ENCODE measurements at regions of chr20 and their contacts with region 1.

Region 1: GRCh38 chr20:52127309-52127708 is 64.3 kb downstream of the ZFP64 start:
- DNase-seq: no peak
- H3K4me3 Mint-ChIP-seq: no peak overlapping the region
- H3K27ac Mint-ChIP-seq: no peak overlapping the region
- H3K4me1 Mint-ChIP-seq: no peaks in the 10 kb centered on the region
- H3K27me3 Mint-ChIP-seq: no peaks in the 10 kb centered on the region
- CTCF ChIP-seq: no peak

Region 2: GRCh38 chr20:51500311-51500710 is 627.0 kb before region 1 on chr20:
- CTCF ChIA-PET with region 1: no interaction called
- POLR2A ChIA-PET with region 1: no interaction called
- intact Hi-C with region 1: no loop called
- DNase-seq: peak; percentile 53
- H3K4me3 Mint-ChIP-seq: no peak overlapping the region
- H3K27ac Mint-ChIP-seq: no peak overlapping the region
- H3K4me1 Mint-ChIP-seq: no peaks in the 10 kb centered on the region
- H3K27me3 Mint-ChIP-seq: peaks cover 13% of the 10 kb centered on the region
- CTCF ChIP-seq: no peak

Region 3: DNA sequence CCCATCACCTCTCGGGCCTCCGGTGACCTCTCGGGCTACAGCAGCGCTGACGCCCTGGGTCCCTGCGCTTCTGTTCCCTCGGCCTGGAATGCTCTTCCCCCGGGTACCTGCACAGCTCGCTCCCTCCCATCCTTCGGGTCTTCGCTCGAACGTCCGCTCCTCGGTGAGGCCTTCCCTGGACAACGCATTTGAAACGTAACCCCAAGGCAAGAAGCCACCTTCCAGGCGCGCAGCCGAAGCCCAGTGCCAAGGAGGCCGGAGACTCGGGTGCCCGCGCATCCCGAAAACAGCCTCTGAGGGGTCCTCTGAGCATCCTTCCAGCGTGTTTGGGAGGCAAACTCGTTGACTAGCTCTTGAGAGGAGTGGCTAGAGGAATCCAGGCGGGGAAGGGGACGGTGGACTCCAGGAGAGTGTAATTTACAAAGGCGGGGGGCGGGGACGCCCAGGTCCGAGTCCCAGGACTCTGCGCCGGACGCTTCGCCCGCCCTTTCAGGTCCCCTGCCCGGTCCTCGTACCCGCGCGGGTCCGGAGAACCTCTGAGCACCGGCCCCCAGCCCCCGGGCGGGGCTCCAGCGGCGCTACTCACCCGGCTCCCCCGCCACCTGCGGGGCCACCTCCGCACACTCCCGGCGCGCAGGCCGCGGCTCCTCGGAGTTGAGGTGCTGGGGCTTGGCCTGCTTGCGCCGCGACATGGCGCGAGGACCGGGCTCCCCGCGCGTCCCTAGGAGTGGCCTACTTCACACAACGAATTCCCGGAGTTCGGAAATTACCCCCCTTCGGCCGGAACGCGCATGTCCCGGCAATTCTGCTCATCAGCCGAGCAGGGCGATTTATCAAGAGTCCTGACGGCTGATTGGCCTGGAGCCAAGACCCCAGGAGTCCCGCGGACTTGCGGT is 22.5 kb before region 1 on chr20:
- CTCF ChIA-PET with region 1: interaction called, 12 read pairs
- POLR2A ChIA-PET with region 1: interaction called, 3 read pairs
- intact Hi-C with region 1: no loop called
- DNase-seq: peak; percentile 39
- H3K4me3 Mint-ChIP-seq: peak overlapping the region; percentile 66
- H3K27ac Mint-ChIP-seq: no peak overlapping the region
- H3K4me1 Mint-ChIP-seq: no peaks in the 10 kb centered on the region
- H3K27me3 Mint-ChIP-seq: no peaks in the 10 kb centered on the region
- CTCF ChIP-seq: no peak

Region 4: GRCh38 chr20:52150440-52151258 is 23.3 kb after region 1 on chr20:
- CTCF ChIA-PET with region 1: interaction called, 86 read pairs
- POLR2A ChIA-PET with region 1: no interaction called
- intact Hi-C with region 1: loop called (anchors 1 kb)
- DNase-seq: peak; percentile 57
- H3K4me3 Mint-ChIP-seq: no peak overlapping the region
- H3K27ac Mint-ChIP-seq: no peak overlapping the region
- H3K4me1 Mint-ChIP-seq: no peaks in the 10 kb centered on the region
- H3K27me3 Mint-ChIP-seq: no peaks in the 10 kb centered on the region
- CTCF ChIP-seq: peak; percentile 68

Region 5: DNA sequence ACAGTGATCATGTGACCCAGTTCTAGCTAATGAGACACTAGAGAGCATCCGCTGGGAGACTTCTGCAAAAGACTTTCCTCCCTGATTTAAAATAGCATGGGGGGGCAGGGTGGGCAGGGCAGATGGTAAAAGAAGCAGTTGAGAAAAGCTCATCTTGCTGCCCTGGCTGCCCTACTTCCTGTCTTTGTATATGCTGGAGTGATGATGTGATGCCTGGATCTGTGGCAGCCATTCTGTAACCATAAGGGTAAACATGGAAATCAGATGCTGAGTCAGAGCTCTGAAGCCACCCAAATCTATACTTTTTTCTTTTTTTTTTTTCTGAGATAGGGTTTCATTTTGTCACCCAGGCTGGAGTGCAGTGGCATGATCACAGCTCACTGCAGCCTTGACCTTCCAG is 38.8 kb after region 1 on chr20:
- CTCF ChIA-PET with region 1: interaction called, 18 read pairs
- POLR2A ChIA-PET with region 1: no interaction called
- intact Hi-C with region 1: no loop called
- DNase-seq: no peak
- H3K4me3 Mint-ChIP-seq: no peak overlapping the region
- H3K27ac Mint-ChIP-seq: no peak overlapping the region
- H3K4me1 Mint-ChIP-seq: no peaks in the 10 kb centered on the region
- H3K27me3 Mint-ChIP-seq: no peaks in the 10 kb centered on the region
- CTCF ChIP-seq: no peak

Region 6: DNA sequence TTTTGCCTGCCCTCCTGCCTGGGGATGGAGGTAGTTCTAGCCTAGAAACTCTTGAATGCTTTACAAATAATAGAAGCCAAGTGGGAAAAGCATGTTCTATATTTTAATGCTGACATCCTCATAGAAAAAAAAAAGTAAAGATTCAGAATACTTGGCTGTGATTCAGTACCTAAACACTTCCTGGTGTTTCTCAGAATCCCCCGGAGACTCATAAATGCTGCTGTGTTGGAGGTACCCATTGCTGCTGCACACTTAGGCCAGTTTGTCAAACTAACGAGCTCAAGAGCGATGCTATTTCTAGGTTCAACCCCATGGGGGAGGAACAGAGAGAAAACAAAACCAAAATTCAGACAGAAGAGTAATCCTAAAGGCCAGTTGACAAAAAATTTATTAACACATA is 103.1 kb after region 1 on chr20:
- CTCF ChIA-PET with region 1: no interaction called
- POLR2A ChIA-PET with region 1: no interaction called
- intact Hi-C with region 1: no loop called
- DNase-seq: no peak
- H3K4me3 Mint-ChIP-seq: no peak overlapping the region
- H3K27ac Mint-ChIP-seq: no peak overlapping the region
- H3K4me1 Mint-ChIP-seq: no peaks in the 10 kb centered on the region
- H3K27me3 Mint-ChIP-seq: peaks cover 37% of the 10 kb centered on the region
- CTCF ChIP-seq: no peak

Region 7: DNA sequence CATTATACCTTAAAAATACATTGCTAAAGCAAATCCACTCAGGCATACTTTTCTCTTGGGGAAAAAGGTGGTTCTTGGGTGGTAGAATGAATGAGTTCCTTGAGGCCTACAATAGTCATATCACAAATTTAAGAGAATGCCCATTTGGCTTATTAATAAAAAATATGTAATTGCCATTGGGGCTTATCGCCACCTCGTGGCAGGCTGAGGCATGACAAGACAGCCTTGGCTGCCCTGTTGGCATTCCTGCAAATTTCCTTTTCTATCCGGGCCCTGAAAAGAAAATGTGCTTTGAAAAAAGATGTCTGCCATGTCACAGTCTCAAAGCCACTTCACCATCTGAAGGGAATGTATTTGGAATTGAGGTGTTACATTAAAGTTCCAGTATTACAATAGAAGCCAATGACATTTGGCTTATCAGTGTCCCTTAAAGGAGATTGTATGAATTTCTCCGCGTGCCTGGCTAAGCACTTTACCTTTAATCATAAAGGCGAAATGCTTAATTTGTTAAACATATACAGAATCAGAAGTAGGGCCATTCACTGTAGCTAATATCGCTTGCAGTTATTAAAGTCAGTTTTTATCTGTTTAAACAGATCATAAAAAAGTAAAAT is 252.5 kb after region 1 on chr20:
- CTCF ChIA-PET with region 1: interaction called, 9 read pairs
- POLR2A ChIA-PET with region 1: no interaction called
- intact Hi-C with region 1: loop called (anchors 1 kb)
- DNase-seq: peak; percentile 36
- H3K4me3 Mint-ChIP-seq: no peak overlapping the region
- H3K27ac Mint-ChIP-seq: no peak overlapping the region
- H3K4me1 Mint-ChIP-seq: no peaks in the 10 kb centered on the region
- H3K27me3 Mint-ChIP-seq: peaks cover 21% of the 10 kb centered on the region
- CTCF ChIP-seq: peak; percentile 88

Region 8: DNA sequence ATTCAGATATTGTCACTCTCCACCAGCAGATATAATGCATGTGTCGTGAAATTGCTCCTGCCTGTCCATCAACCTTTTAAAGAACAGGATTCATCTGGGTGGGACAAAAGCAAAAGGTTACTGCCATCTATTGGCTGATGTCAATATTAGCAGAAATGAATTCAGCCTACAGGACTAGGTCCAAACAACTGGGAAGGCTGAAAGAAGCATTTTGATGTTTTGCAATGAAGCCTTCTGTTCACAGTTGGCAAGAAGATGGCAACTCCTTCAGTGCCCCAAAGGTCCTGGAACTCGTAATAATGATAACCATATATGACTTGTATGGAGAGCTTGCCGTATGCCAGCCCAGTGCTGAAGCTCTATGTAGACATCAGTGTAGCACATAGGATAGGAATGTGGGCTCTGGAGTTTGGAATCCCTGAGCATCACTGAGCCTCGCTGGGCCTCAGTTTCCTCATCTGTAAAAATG is 1935.5 kb after region 1 on chr20:
- CTCF ChIA-PET with region 1: interaction called, 4 read pairs
- POLR2A ChIA-PET with region 1: no interaction called
- intact Hi-C with region 1: loop called (anchors 5 kb)
- DNase-seq: peak; percentile 64
- H3K4me3 Mint-ChIP-seq: no peak overlapping the region
- H3K27ac Mint-ChIP-seq: no peak overlapping the region
- H3K4me1 Mint-ChIP-seq: peaks cover 21% of the 10 kb centered on the region
- H3K27me3 Mint-ChIP-seq: no peaks in the 10 kb centered on the region
- CTCF ChIP-seq: peak; percentile 59

Measured in MCF 10A (cell line).